ENCODE measurements at regions of chr2 and their contacts with region 1.

Region 1: DNA sequence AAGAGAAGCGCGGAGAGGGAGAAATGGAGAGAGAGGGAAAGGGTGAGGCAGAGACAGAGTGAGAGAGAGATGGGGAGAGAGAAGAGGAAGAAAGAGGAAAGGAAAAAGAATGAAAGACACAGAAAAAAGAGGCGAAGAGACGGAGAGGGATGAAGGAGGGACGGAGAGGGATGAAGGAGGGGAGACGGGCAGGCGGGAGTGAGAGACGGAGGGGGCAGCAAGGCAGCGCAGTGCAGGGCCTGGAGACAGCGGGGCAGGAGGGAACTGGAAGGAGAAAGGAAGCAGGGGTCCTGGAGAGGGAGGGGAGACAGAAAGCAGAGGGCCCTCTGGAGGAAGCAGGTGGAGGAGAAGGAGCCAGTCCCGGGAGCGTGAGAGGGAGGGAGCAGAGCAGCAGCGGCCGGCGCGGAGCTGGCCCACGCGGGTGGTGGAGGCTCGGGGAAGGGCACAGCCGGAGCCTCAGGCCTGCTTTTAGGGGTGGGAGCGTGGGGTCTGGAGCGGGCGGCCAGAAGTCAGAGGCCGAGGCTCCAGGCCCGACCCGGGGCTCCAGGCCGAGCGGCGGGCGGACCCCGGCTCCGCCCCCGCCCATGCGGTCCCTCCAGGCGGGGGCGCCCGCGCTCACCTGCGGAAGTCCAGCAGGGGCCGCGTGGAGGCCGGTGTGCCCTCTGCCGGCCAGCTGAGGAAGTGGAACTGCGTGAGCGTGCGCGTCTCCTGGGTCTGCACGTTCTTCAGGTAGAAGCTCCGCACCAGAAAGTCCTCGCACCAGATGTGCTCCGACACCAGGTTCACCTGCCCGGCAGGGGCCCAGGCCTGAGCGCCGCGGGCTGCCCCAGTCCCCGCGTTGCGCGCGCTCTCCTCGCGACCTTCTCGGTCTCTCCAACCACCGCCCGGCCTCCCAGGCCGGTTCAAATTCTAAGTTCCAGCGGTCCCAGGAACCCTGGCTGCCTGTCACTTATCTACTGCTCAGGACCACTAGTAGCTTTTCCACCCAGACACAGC is 14.5 kb downstream of the PTPRN start:
- DNase-seq: peak; percentile 80 to 93 (median 87)
- H3K4me3 ChIP-seq: peak overlapping the region in 2 of 4 donors; percentile 16 to 62
- H3K27ac ChIP-seq: peak overlapping the region in 2 of 5 donors; percentile 75 to 79
- H3K4me1 ChIP-seq: peaks cover 0 to 7% of the 10 kb centered on the region in 2 donors
- H3K27me3 ChIP-seq: no peaks in the 10 kb centered on the region
- CTCF ChIP-seq: peak; percentile 71 to 100 (median 92)
- POLR2A ChIP-seq: peak; percentile 25 to 43

Region 2: DNA sequence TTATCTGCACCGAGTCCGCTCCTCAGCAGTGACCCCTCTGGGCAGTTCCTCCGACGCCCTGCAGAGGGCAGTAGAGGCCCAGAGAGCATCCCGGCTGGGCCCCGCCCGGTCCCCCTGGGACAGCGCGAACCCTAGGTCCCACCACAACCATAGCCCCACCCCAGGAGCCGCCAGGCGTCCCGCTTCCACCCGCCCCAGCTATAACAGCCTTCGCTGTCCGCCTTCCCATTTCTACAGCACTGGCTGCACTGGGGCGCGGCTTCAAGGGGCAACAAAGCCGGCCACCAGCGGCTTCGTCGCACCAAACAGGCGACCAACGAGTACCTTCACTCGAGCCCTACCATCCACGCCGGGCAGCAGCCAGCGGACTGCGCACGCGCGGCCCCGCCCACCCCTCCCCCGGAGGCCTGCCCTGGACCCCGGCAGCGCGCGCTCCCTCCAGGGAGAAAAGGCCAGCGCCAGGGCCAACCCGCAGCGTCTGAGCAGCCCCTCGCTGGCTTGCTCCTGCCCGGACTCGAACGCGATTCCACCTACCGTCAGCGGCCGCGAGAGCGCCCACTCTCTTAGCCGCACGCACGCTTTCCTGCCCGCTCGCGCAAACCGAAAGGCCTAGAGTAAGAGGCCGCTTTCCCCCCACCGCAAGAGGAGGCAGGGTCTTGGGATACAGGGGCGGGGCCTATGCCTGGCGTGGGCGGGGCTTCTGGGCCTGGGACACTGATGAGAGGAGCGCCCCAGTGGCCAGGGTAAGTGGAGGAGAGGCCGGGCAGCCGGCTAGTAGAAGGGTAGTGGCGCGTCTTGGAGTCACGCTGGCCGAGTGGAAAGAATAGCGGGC is 134.3 kb before region 1 on chr2 and contains the start of gene NHEJ1:
- intact Hi-C with region 1: loop called (anchors 2 to 5 kb)
- DNase-seq: peak; percentile 97 to 99 (median 98)
- H3K4me3 ChIP-seq: peak within 1 kb of the TSS; percentile 33 to 73 (median 52)
- H3K27ac ChIP-seq: peak within 1 kb of the TSS; percentile 83 to 96 (median 90)
- H3K4me1 ChIP-seq: peaks cover 7 to 9% of the 10 kb centered on the region in 2 donors
- H3K27me3 ChIP-seq: no peaks in the 10 kb centered on the region
- CTCF ChIP-seq: peak; percentile 92 to 99 (median 96)
- POLR2A ChIP-seq: peak; percentile 44 to 65
- total RNA-seq, gene NHEJ1: 11.9 to 22.9 (median 17.8) TPM

Region 3: GRCh38 chr2:219245148-219245898 is 49.3 kb before region 1 on chr2 and contains the starts of genes GLB1L and STK16:
- intact Hi-C with region 1: loop called (anchors 10 kb)
- DNase-seq: peak; percentile 92 to 98 (median 96)
- H3K4me3 ChIP-seq: peak within 1 kb of the TSS; percentile 54 to 70 (median 65)
- H3K27ac ChIP-seq: peak within 1 kb of the TSS; percentile 68 to 96 (median 87)
- H3K4me1 ChIP-seq: peaks cover 28 to 35% of the 10 kb centered on the region in 2 donors
- H3K27me3 ChIP-seq: no peaks in the 10 kb centered on the region
- CTCF ChIP-seq: no peak
- POLR2A ChIP-seq: peak; percentile 68 to 87
- total RNA-seq, gene GLB1L: 6.3 to 25.0 (median 14.2) TPM
- total RNA-seq, gene STK16: 19.2 to 55.8 (median 26.8) TPM

Region 4: GRCh38 chr2:219344751-219345430 is 50.2 kb after region 1 on chr2:
- intact Hi-C with region 1: no loop called
- DNase-seq: peak; percentile 39 to 80 (median 56)
- H3K4me3 ChIP-seq: peak overlapping the region in 1 of 4 donors; percentile 11
- H3K27ac ChIP-seq: no peak overlapping the region
- H3K4me1 ChIP-seq: peaks cover 0 to 8% of the 10 kb centered on the region in 2 donors
- H3K27me3 ChIP-seq: no peaks in the 10 kb centered on the region
- CTCF ChIP-seq: no peak
- POLR2A ChIP-seq: no peak

Measured in adrenal gland (tissue), 19 donors.